ENCODE measurements at regions of chr11 and their contacts with region 1.

Region 1: GRCh38 chr11:24422376-24422775 is 74.5 kb upstream of the LUZP2 start:
- DNase-seq: no peak
- H3K4me3 ChIP-seq: no peak overlapping the region
- H3K27ac ChIP-seq: no peak overlapping the region
- H3K4me1 ChIP-seq: no peaks in the 10 kb centered on the region
- H3K27me3 ChIP-seq: no peaks in the 10 kb centered on the region
- CTCF ChIP-seq: no peak
- EP300 ChIP-seq: no peak
- POLR2A ChIP-seq: no peak

Region 2: DNA sequence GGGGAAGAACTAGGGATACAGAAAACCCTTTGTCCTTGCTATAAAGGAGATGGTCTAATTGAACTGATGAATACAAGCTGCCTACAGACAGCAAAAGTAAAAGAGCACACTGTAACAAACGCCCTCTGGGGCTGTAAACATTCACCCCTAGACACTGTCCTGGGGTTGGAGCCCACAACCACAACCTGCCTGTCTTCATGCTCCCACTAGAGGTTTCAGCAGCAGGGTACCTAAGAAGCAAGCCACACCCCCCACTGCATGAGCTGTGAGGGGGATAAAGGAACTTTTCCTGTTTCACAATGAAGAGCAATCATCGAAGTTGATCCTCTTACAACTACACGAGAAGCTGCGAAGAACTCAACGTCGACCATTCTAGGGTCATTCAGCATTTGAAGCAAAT is 16.0 kb before region 1 on chr11:
- intact Hi-C with region 1: loop called in 1 of 4 experiments (anchors 1 kb)
- DNase-seq: no peak
- H3K4me3 ChIP-seq: no peak overlapping the region
- H3K27ac ChIP-seq: no peak overlapping the region
- H3K4me1 ChIP-seq: no peaks in the 10 kb centered on the region
- H3K27me3 ChIP-seq: no peaks in the 10 kb centered on the region
- CTCF ChIP-seq: no peak
- EP300 ChIP-seq: no peak
- POLR2A ChIP-seq: no peak

Measured in ovary (tissue), 10 donors.